ENCODE measurements at regions of chr2 and their contacts with region 1.

Region 1: GRCh38 chr2:185817991-185818390 is 79.4 kb downstream of the FSIP2 start:
- DNase-seq: no peak

Region 2: DNA sequence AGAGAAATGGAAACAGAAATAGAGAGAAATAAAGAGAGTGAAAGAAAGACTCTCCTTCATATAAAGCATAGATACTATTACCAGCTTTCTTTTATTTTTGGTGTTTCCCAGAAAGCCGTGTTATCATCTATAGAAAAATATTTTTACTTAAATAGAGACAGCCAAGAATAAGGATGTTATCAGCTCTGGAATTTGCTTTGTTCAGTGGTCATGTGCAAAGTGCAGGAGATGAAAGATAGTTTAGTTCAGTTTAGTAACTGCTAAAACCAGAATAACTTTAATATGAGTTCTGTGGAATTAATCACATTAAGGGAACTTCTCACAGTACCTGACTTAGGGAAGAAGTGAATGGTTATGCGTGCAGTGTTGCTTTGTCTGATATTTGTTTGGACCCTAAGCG is 1489.6 kb after region 1 on chr2:
- intact Hi-C with region 1: loop called in 1 of 2 experiments (anchors 5 kb)
- DNase-seq: no peak